Activated CD4-positive, alpha-beta T cell treated with anti-CD3 and anti-CD28 coated beads for 36 hours (primary cell): ENCODE measurements at regions of chr12 and their contacts with region 1.

Region 1: DNA sequence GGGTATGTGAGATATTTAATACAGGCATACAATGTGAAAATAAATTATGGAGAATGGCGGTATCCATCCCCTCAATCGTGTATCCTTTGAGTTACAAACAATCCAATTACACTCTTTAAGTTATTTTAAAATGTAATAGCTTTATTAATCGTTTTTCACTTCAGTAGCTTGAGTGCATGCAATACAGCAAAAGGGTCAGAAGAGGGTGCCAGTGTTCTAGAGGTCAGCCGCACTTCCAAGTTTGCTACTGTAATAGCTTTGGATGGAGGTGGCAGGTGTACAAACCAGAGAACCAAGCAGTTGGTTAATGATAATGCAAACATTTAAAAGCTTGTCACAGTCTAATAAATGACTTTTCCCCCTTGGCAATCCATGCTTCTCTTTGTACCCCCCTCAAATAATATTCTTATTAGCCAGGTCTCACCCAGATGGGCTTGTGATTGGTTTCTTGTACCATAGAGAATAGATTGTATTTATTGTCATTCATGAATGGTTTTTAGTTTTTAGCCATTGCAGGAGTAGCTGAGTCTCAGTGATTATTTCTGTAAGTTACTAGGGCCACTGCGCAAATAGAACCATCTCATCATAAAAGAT is 127.0 kb downstream of the ERC1 start:
- DNase-seq: peak; percentile 82
- ATAC-seq: no peak
- H3K4me3 Mint-ChIP-seq: no peak overlapping the region
- H3K27ac Mint-ChIP-seq: no peak overlapping the region
- H3K4me1 Mint-ChIP-seq: peaks cover 18% of the 10 kb centered on the region
- H3K27me3 Mint-ChIP-seq: no peaks in the 10 kb centered on the region

Region 2: GRCh38 chr12:630656-631632 is 487.1 kb before region 1 on chr12:
- CTCF ChIA-PET with region 1: no interaction called
- POLR2A ChIA-PET with region 1: no interaction called
- intact Hi-C with region 1: no loop called
- DNase-seq: peak; percentile 91
- ATAC-seq: peak; percentile 98
- H3K4me3 Mint-ChIP-seq: peak overlapping the region; percentile 88
- H3K27ac Mint-ChIP-seq: peak overlapping the region; percentile 100
- H3K4me1 Mint-ChIP-seq: peaks cover 47% of the 10 kb centered on the region
- H3K27me3 Mint-ChIP-seq: no peaks in the 10 kb centered on the region

Region 3: GRCh38 chr12:1099158-1099557 is 18.9 kb before region 1 on chr12:
- CTCF ChIA-PET with region 1: interaction called, 95 read pairs
- POLR2A ChIA-PET with region 1: no interaction called
- intact Hi-C with region 1: loop called in 1 of 2 experiments (anchors 1 kb)
- DNase-seq: peak; percentile 67
- ATAC-seq: peak; percentile 88
- H3K4me3 Mint-ChIP-seq: no peak overlapping the region
- H3K27ac Mint-ChIP-seq: no peak overlapping the region
- H3K4me1 Mint-ChIP-seq: peaks cover 62% of the 10 kb centered on the region
- H3K27me3 Mint-ChIP-seq: peaks cover 2% of the 10 kb centered on the region

Region 4: DNA sequence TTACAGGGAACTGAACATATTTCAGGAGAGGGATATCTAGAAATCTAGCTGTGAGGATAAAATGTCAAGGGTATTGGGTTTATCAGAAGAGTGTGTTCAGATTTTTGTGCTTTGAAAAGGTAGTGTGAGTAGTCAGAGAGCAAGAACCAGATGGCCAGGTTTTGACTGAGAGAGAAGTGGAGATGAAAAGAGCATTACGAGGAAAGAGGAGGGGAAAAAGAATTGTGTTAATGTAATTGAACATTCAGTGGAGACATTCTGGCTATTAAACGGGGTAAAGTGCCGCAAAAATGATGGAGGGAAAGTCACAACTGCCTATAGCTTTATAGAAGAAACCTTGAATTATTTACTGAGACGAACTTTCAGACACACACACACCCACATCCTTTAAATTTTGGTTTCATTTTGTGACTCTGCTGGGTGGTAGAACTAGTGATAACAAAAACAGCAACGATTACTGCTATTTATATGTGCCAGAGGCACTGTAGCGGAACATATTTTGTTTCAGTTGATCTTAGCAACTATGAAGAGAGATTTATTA is 86.6 kb after region 1 on chr12:
- CTCF ChIA-PET with region 1: interaction called, 11 read pairs
- POLR2A ChIA-PET with region 1: no interaction called
- intact Hi-C with region 1: no loop called
- DNase-seq: no peak
- ATAC-seq: peak; percentile 93
- H3K4me3 Mint-ChIP-seq: no peak overlapping the region
- H3K27ac Mint-ChIP-seq: no peak overlapping the region
- H3K4me1 Mint-ChIP-seq: peaks cover 18% of the 10 kb centered on the region
- H3K27me3 Mint-ChIP-seq: no peaks in the 10 kb centered on the region

Region 5: DNA sequence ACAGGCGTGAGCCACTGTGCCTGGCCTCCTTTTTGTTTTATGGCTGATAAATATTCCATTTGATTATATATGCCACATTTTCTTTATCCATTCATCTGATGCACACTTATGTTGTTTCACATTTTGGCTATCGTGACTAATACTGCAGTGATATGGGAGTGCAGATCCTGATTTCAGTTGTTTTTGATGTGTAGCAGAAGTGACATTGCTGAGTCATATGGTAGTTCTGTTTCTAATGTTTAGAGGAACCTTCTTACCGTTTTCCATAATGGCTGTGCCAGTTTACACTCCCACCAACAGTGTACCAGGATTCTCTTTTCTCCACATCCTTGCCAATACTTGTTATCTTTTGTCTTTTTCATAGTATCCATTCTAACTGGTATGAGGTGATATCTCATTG is 108.9 kb after region 1 on chr12:
- CTCF ChIA-PET with region 1: no interaction called
- POLR2A ChIA-PET with region 1: no interaction called
- intact Hi-C with region 1: loop called in 1 of 2 experiments (anchors 5 kb)
- DNase-seq: no peak
- ATAC-seq: peak; percentile 83
- H3K4me3 Mint-ChIP-seq: no peak overlapping the region
- H3K27ac Mint-ChIP-seq: no peak overlapping the region
- H3K4me1 Mint-ChIP-seq: peaks cover 25% of the 10 kb centered on the region
- H3K27me3 Mint-ChIP-seq: no peaks in the 10 kb centered on the region

Region 6: DNA sequence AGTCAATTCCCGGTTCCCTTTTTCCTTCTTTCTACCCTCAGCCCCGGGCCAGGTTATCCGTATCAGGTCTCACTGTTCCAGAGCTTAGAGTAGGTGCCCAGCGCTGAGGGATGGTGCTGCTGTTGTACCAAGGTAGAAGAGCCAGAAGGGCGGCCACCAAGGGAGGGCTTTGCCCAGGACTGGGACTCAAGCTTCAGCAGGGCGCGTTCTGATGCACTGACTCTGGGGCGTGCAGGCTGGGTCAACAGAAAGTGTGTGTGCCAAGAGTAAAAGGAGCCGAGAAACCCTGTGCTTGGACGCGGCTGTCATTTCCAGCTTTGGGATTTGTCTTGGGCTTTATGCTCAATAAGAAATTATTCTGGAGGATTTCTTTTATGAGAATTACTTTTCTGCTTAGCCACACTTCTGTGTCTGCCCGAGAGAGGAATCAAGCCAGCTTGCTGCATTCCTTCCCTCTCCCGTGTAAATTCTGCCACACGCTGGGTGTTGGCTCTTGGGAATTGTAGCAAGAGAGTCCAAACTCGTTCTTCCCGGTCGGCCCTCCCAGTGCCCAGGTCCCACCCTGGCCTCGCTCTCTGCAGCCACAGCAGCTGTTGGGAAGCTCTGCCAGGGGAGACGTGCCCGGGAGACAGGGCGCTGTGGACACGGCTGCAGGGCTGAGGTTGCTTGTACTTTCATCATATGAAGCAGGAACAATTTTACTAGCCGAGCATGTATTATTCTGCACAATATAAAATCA is 378.3 kb after region 1 on chr12:
- CTCF ChIA-PET with region 1: no interaction called
- POLR2A ChIA-PET with region 1: no interaction called
- intact Hi-C with region 1: no loop called
- DNase-seq: no peak
- ATAC-seq: no peak
- H3K4me3 Mint-ChIP-seq: no peak overlapping the region
- H3K27ac Mint-ChIP-seq: no peak overlapping the region
- H3K4me1 Mint-ChIP-seq: no peaks in the 10 kb centered on the region
- H3K27me3 Mint-ChIP-seq: no peaks in the 10 kb centered on the region

Region 7: GRCh38 chr12:1544996-1545700 is 427.1 kb after region 1 on chr12:
- CTCF ChIA-PET with region 1: interaction called, 10 read pairs
- POLR2A ChIA-PET with region 1: no interaction called
- intact Hi-C with region 1: no loop called
- DNase-seq: no peak
- ATAC-seq: no peak
- H3K4me3 Mint-ChIP-seq: no peak overlapping the region
- H3K27ac Mint-ChIP-seq: no peak overlapping the region
- H3K4me1 Mint-ChIP-seq: no peaks in the 10 kb centered on the region
- H3K27me3 Mint-ChIP-seq: peaks cover 29% of the 10 kb centered on the region

Region 8: DNA sequence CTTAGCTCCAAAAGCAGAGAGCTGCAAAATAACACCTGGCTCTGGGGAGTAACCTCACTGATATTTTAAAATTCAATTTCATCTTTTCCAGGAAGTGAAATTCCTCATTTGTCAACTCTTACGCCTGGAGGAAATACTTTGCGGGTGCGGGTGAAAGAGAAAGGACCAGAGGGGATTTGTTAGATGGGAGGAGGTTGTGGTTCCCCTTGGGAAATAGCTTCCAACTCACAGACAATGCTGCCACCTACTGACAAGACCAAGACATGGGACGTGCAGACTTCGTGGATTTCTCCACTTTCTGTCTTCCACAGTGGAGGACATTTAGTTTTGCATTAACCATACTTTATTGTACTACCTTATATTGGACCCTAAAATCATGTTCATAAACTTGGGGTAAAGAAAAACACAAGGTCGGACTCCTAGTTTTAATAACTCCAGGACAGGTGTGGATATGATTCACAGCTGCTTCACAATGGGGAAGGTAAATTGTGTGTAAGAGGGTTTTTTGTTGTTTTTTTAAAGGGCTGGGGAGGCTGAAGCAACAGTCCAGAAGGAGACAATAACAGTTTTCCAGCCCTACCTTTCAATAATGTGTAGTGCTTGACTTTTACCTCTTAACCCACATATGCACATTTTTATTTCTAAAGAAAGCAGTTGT is 465.5 kb after region 1 on chr12:
- CTCF ChIA-PET with region 1: interaction called, 133 read pairs
- POLR2A ChIA-PET with region 1: interaction called, 4 read pairs
- intact Hi-C with region 1: loop called (anchors 1 kb)
- DNase-seq: peak; percentile 78
- ATAC-seq: peak; percentile 74
- H3K4me3 Mint-ChIP-seq: peak overlapping the region; percentile 20
- H3K27ac Mint-ChIP-seq: no peak overlapping the region
- H3K4me1 Mint-ChIP-seq: peaks cover 19% of the 10 kb centered on the region
- H3K27me3 Mint-ChIP-seq: no peaks in the 10 kb centered on the region

Region 9: GRCh38 chr12:1605129-1606020 is 487.3 kb after region 1 on chr12:
- CTCF ChIA-PET with region 1: interaction called, 21 read pairs
- POLR2A ChIA-PET with region 1: interaction called, 3 read pairs
- intact Hi-C with region 1: no loop called
- DNase-seq: peak; percentile 70
- ATAC-seq: peak; percentile 60
- H3K4me3 Mint-ChIP-seq: peak overlapping the region; percentile 68
- H3K27ac Mint-ChIP-seq: peak overlapping the region; percentile 72
- H3K4me1 Mint-ChIP-seq: peaks cover 44% of the 10 kb centered on the region
- H3K27me3 Mint-ChIP-seq: no peaks in the 10 kb centered on the region